ENCODE measurements at regions of chr3 and their contacts with region 1.

Region 1: DNA sequence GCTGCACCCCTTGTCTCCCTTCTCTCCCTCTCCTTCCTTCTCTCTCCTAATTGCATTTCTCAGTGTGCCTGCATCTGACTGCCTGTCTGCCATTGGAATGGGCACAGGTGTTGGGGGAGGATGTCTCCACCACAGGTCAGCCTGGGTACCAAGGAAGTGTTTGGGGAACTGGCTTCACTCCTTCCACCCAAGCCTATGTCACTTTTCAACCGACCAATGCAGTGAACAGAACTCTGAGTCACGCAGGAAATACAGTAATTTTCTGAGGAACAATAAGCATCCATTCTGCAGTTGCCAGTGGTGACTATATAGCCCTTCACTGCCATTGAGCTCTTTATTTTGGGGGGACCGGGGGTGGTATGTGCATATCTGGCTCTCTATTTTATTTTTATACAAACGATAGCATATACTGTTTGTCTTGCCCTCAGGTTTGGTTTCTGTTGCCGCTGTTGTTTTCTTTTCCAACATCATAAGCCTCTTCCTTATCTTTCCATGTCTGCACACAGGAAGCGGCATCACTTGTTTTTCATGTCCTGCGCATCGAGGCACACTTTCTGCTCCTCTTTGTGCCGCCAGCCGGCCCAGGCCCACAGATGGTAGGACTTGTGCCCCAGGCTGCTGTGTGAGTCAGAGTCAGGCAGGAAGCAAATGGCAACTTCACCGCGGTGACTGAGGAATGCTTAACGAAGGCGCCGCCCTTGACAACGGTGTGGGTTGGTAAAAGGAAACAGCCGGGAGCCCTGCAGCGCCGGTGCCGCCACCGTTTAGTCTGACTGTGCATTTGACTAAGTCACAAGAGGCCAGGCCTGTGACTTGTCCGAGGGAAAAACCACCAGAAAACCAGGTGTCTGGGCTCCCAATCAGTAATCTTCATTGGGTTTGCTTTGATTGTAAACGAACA is 21.1 kb upstream of the CDCP1 start:
- DNase-seq: peak; percentile 97
- H3K4me3 Mint-ChIP-seq: peak overlapping the region; percentile 24
- H3K27ac Mint-ChIP-seq: peak overlapping the region; percentile 94
- H3K4me1 Mint-ChIP-seq: peaks cover 30% of the 10 kb centered on the region
- H3K27me3 Mint-ChIP-seq: no peaks in the 10 kb centered on the region
- CTCF ChIP-seq: no peak

Region 2: DNA sequence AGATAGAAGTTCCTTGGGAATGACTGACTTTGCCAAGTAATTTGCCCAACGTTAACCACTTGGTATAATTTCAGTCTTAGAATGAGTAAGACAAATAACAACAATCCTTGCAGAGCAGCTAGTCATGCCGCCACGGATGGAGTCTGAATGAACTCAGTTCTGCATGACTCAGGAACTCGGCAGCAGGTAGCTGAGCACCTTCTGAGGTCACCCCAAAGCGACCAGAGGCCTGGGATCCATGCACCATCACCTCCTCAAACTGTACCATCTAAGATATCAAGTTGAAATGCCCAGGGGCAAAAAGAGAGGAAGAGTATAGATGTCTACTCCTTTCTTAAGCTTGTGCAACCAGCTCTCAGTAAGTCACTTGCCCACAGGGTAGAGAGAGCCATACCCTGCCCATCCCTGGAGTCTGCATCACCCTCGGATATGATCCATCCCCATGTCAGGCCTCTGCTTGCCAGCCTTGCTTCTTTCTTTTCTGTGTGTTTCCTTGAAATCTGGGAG is 12.6 kb before region 1 on chr3:
- CTCF ChIA-PET with region 1: interaction called, 6 read pairs
- POLR2A ChIA-PET with region 1: interaction called, 29 read pairs
- intact Hi-C with region 1: no loop called
- DNase-seq: peak; percentile 75
- H3K4me3 Mint-ChIP-seq: no peak overlapping the region
- H3K27ac Mint-ChIP-seq: peak overlapping the region; percentile 63
- H3K4me1 Mint-ChIP-seq: peaks cover 12% of the 10 kb centered on the region
- H3K27me3 Mint-ChIP-seq: no peaks in the 10 kb centered on the region
- CTCF ChIP-seq: no peak

Region 3: GRCh38 chr3:45199837-45200648 is 32.8 kb after region 1 on chr3:
- CTCF ChIA-PET with region 1: interaction called, 3 read pairs
- POLR2A ChIA-PET with region 1: interaction called, 10 read pairs
- intact Hi-C with region 1: loop called (anchors 5 kb)
- DNase-seq: peak; percentile 94
- H3K4me3 Mint-ChIP-seq: no peak overlapping the region
- H3K27ac Mint-ChIP-seq: peak overlapping the region; percentile 63
- H3K4me1 Mint-ChIP-seq: peaks cover 22% of the 10 kb centered on the region
- H3K27me3 Mint-ChIP-seq: no peaks in the 10 kb centered on the region
- CTCF ChIP-seq: no peak

Measured in MCF 10A (cell line).